ENCODE measurements at regions of chr1 and their contacts with region 1.

Region 1: DNA sequence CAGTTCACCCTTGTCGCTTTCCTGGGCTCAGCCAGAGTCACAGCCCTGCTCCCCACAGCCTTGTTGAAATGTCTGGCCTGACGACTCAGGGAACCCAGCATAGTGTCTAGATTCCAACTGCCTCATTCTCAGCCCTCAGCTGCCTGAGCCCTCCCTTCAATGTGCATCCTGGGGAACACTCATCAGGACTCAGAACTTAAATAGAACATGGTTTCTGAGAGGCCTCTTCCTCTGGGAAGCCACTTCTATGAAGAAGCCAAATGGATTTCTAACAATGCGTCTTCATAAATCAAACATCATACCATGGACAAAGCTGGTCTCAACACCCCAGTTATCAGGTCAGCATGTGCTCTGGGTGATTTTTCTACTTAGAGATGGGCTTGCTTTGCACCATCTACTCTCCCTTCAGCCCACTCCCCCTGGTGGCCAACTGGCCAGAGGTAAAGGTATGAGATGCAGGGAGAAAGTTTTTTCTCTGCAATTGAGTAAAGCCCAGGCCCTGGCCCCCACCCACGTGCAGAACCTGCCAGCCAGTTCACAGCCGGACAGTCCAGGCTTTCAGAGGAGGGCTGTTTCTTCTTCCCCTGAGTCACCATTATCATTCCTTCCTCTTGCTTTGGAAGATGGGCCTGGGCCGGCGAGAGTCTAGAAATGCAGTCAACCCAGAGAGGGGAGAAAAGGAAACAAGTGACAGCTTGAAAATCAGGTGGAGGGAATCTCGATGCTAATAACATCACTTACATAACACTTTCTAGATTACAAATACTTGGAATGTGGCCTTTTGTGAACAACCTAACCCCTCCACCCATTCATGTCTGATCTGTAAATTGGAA is 32.1 kb downstream of the CD244 start:
- DNase-seq: peak; percentile 86 to 89
- H3K4me3 ChIP-seq: no peak overlapping the region
- H3K4me3 Mint-ChIP-seq: no peak overlapping the region
- H3K27ac Mint-ChIP-seq: no peak overlapping the region
- H3K4me1 ChIP-seq: 0 out of 2 replicates have a peak, but pooled peaks cover 3% of the 10 kb centered on the region
- H3K4me1 Mint-ChIP-seq: no peaks in the 10 kb centered on the region
- H3K27me3 ChIP-seq: no peaks in the 10 kb centered on the region
- H3K27me3 Mint-ChIP-seq: no peaks in the 10 kb centered on the region
- CTCF ChIP-seq: peak; percentile 84 to 96

Region 2: DNA sequence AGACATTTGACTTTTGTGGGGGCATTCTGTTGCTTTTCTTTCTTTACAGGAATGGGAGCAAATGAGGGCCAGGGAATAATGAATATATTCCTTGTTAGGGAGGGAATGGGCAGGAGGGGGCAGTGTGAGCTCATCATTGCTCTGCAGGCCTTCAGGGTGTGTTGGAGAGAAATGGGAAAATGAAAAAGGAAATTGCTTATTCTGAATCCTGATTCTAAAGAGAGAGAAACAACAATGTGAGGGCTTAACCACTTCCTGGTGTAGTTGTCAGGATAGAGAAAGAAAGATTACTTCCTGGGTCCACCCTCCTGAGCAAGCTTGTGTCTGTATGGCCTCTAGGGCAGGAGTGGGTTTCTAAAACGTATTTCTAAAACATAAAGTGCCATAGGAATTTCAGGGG is 401.9 kb before region 1 on chr1:
- CTCF ChIA-PET with region 1: no interaction called
- POLR2A ChIA-PET with region 1: no interaction called
- intact Hi-C with region 1: loop called (anchors 2 kb)
- DNase-seq: peak in 1 of 2 experiments; percentile 58
- H3K4me3 ChIP-seq: no peak overlapping the region
- H3K4me3 Mint-ChIP-seq: no peak overlapping the region
- H3K27ac Mint-ChIP-seq: no peak overlapping the region
- H3K4me1 ChIP-seq: no peaks in the 10 kb centered on the region
- H3K4me1 Mint-ChIP-seq: no peaks in the 10 kb centered on the region
- H3K27me3 ChIP-seq: no peaks in the 10 kb centered on the region
- H3K27me3 Mint-ChIP-seq: no peaks in the 10 kb centered on the region
- CTCF ChIP-seq: peak; percentile 58 to 77

Region 3: GRCh38 chr1:160607011-160607671 is 223.4 kb before region 1 on chr1:
- CTCF ChIA-PET with region 1: no interaction called
- POLR2A ChIA-PET with region 1: no interaction called
- intact Hi-C with region 1: no loop called
- DNase-seq: peak; percentile 57 to 67
- H3K4me3 ChIP-seq: no peak overlapping the region
- H3K4me3 Mint-ChIP-seq: no peak overlapping the region
- H3K27ac Mint-ChIP-seq: no peak overlapping the region
- H3K4me1 ChIP-seq: no peaks in the 10 kb centered on the region
- H3K4me1 Mint-ChIP-seq: no peaks in the 10 kb centered on the region
- H3K27me3 ChIP-seq: no peaks in the 10 kb centered on the region
- H3K27me3 Mint-ChIP-seq: peaks cover 3% of the 10 kb centered on the region
- CTCF ChIP-seq: peak; percentile 69 to 71

Region 4: DNA sequence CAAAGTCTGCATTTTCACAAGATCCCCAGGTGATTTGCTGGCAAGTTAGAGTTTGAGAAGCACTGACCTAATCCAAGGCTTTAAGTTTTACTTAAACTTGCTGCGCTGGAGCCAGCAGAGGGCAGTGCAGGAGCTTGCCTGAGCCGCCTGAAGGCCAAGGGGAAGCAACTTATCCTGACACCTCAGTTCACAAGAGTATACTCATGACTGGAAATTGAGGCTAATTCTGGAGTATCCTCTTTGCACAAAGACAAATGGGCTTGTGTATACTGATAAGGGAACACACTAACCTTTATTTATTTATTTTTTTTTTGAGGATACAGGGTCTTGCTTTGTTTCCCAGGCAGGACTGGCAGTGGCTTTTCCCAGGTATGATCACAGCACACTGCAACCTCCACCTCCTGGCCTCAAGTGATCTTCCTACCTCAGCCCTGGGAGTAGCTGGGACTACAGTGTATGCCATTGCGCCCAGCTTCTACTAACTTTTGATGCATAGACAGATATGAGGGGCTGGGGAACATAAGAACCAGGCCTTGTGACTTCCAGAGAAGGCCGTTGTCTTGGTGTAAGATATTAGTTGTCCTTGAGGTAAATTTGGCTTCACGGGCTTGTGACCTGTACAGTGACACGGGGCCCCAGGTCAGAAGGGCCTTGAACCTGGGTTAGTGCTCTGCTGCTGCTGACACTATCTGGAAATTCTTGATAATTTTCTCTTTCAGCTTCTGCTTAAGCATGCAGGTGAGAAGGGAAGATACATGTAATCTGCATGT is 154.7 kb before region 1 on chr1:
- CTCF ChIA-PET with region 1: interaction called, 3 read pairs
- POLR2A ChIA-PET with region 1: no interaction called
- intact Hi-C with region 1: loop called (anchors 1 kb)
- DNase-seq: peak; percentile 70 to 72
- H3K4me3 ChIP-seq: no peak overlapping the region
- H3K4me3 Mint-ChIP-seq: no peak overlapping the region
- H3K27ac Mint-ChIP-seq: no peak overlapping the region
- H3K4me1 ChIP-seq: no peaks in the 10 kb centered on the region
- H3K4me1 Mint-ChIP-seq: no peaks in the 10 kb centered on the region
- H3K27me3 ChIP-seq: no peaks in the 10 kb centered on the region
- H3K27me3 Mint-ChIP-seq: no peaks in the 10 kb centered on the region
- CTCF ChIP-seq: peak; percentile 68 to 83

Region 5: GRCh38 chr1:160726498-160727315 is 103.8 kb before region 1 on chr1:
- CTCF ChIA-PET with region 1: interaction called, 4 read pairs
- POLR2A ChIA-PET with region 1: no interaction called
- intact Hi-C with region 1: loop called (anchors 1 kb)
- DNase-seq: peak; percentile 73
- H3K4me3 ChIP-seq: no peak overlapping the region
- H3K4me3 Mint-ChIP-seq: no peak overlapping the region
- H3K27ac Mint-ChIP-seq: no peak overlapping the region
- H3K4me1 ChIP-seq: peaks cover 12% of the 10 kb centered on the region
- H3K4me1 Mint-ChIP-seq: no peaks in the 10 kb centered on the region
- H3K27me3 ChIP-seq: no peaks in the 10 kb centered on the region
- H3K27me3 Mint-ChIP-seq: no peaks in the 10 kb centered on the region
- CTCF ChIP-seq: peak; percentile 74 to 79

Region 6: GRCh38 chr1:160777486-160778089 is 52.9 kb before region 1 on chr1:
- CTCF ChIA-PET with region 1: interaction called, 3 read pairs
- POLR2A ChIA-PET with region 1: no interaction called
- intact Hi-C with region 1: loop called (anchors 1 kb)
- DNase-seq: peak; percentile 56 to 64
- H3K4me3 ChIP-seq: no peak overlapping the region
- H3K4me3 Mint-ChIP-seq: no peak overlapping the region
- H3K27ac Mint-ChIP-seq: no peak overlapping the region
- H3K4me1 ChIP-seq: peaks cover 20% of the 10 kb centered on the region
- H3K4me1 Mint-ChIP-seq: peaks cover 14% of the 10 kb centered on the region
- H3K27me3 ChIP-seq: no peaks in the 10 kb centered on the region
- H3K27me3 Mint-ChIP-seq: no peaks in the 10 kb centered on the region
- CTCF ChIP-seq: peak; percentile 55 to 70

Region 7: GRCh38 chr1:160884579-160884978 is 54.0 kb after region 1 on chr1:
- CTCF ChIA-PET with region 1: interaction called, 3 read pairs
- POLR2A ChIA-PET with region 1: no interaction called
- intact Hi-C with region 1: loop called (anchors 1 kb)
- DNase-seq: peak; percentile 32 to 59
- H3K4me3 ChIP-seq: no peak overlapping the region
- H3K4me3 Mint-ChIP-seq: no peak overlapping the region
- H3K27ac Mint-ChIP-seq: peak overlapping the region; percentile 21
- H3K4me1 ChIP-seq: no peaks in the 10 kb centered on the region
- H3K4me1 Mint-ChIP-seq: peaks cover 7% of the 10 kb centered on the region
- H3K27me3 ChIP-seq: no peaks in the 10 kb centered on the region
- H3K27me3 Mint-ChIP-seq: no peaks in the 10 kb centered on the region
- CTCF ChIP-seq: peak; percentile 56 to 62

Region 8: GRCh38 chr1:160951443-160952128 is 121.0 kb after region 1 on chr1:
- CTCF ChIA-PET with region 1: interaction called, 19 read pairs
- POLR2A ChIA-PET with region 1: no interaction called
- intact Hi-C with region 1: loop called (anchors 1 kb)
- DNase-seq: peak; percentile 75 to 78
- H3K4me3 ChIP-seq: no peak overlapping the region
- H3K4me3 Mint-ChIP-seq: no peak overlapping the region
- H3K27ac Mint-ChIP-seq: no peak overlapping the region
- H3K4me1 ChIP-seq: peaks cover 47% of the 10 kb centered on the region
- H3K4me1 Mint-ChIP-seq: peaks cover 42% of the 10 kb centered on the region
- H3K27me3 ChIP-seq: no peaks in the 10 kb centered on the region
- H3K27me3 Mint-ChIP-seq: no peaks in the 10 kb centered on the region
- CTCF ChIP-seq: peak; percentile 60 to 88